Cardiac septum (tissue), 1 donor: ENCODE measurements at regions of chr4 and their contacts with region 1.

Region 1: GRCh38 chr4:98658287-98659105 is at the start of gene TSPAN5:
- DNase-seq: peak; percentile 83
- total RNA-seq, gene TSPAN5: 8.6 TPM

Region 2: GRCh38 chr4:98467627-98468072 is 190.8 kb before region 1 on chr4:
- intact Hi-C with region 1: loop called (anchors 5 kb)
- DNase-seq: no peak

Region 3: GRCh38 chr4:98522636-98523395 is 135.7 kb before region 1 on chr4:
- intact Hi-C with region 1: loop called (anchors 5 kb)
- DNase-seq: no peak

Region 4: GRCh38 chr4:98584265-98584664 is 74.2 kb before region 1 on chr4:
- intact Hi-C with region 1: no loop called
- DNase-seq: no peak

Region 5: GRCh38 chr4:98688411-98689290 is 30.2 kb after region 1 on chr4:
- intact Hi-C with region 1: no loop called
- DNase-seq: no peak

Region 6: DNA sequence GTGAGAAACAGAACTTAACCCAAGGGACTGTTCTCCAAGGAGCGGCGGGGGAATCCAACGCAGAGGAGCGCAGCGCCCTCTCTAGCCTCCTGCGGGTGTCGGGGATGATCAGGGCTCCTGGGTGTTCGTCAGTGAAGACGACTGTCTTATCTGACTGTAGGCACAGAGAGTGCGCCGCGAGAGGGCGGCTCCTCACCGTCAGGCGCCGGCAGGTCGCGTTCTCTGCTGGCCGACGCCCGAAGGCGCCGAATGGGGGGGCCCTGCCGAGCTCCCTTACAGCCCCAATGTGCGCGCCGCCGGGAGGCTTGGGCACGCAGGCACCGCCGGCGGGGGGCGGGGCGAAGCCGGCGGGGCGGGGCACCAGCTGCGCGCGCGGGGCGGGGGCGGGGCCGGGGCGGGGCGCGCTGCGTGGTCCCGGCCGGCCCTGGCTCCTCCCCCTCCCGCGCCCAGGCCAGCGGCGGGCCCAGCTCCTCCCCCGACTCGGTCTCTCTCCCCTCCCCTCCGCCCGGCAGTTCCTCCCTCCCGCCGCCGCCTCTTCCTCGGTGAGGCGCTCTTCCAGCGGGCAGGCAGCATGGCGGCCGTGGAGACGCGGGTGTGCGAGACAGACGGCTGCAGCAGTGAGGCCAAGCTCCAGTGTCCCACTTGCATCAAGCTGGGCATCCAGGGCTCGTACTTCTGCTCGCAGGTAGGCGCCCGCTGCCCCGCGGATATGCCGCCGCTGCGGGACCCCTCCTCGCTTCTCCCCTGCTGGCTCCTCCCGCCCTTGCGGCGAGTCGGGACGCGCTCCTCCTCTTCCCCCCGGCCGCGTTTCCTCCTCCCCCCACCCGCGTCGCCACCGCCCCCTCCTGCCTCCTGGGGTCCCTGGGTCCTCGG is 336.9 kb after region 1 on chr4 and contains the start of gene METAP1:
- intact Hi-C with region 1: loop called (anchors 2 kb)
- DNase-seq: peak; percentile 97
- total RNA-seq, gene METAP1: 56.2 TPM